ENCODE measurements at regions of chr2 and their contacts with region 1.

Region 1: DNA sequence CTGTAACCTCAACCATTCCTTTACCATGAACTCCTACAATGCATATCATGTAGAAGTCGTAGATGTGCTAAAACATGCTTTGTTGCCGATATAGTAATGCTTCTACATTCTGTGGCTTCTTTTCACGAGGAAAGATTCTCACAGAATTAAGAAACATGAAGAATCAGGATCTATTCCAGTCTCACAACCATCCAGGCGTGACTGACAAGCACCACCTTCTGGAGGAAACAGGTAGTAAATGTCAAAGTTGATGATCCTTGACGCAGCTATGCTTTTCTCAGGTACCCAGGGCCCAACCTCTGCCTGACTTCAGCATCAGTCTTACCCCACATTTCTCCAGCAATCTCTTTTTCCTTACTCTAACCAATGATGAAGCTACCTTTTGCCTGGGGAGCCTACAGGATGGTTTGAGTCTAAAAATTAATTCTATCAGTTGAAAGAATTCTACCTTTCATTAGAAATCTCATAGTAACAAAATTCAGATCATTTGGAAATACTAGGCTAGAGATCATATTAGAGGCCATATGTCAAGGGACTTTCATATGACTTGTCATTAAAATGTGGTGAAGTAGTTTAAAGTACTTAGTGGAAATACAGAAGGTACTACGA is 123.3 kb upstream of the RND3 start:
- DNase-seq: peak; percentile 74
- H3K4me3 Mint-ChIP-seq: no peak overlapping the region
- H3K27ac Mint-ChIP-seq: no peak overlapping the region
- H3K4me1 Mint-ChIP-seq: peaks cover 10% of the 10 kb centered on the region
- H3K27me3 Mint-ChIP-seq: no peaks in the 10 kb centered on the region
- CTCF ChIP-seq: peak; percentile 82

Region 2: GRCh38 chr2:149733936-149734685 is 876.7 kb before region 1 on chr2:
- CTCF ChIA-PET with region 1: no interaction called
- POLR2A ChIA-PET with region 1: no interaction called
- intact Hi-C with region 1: loop called (anchors 10 kb)
- DNase-seq: peak; percentile 33
- H3K4me3 Mint-ChIP-seq: no peak overlapping the region
- H3K27ac Mint-ChIP-seq: peak overlapping the region; percentile 40
- H3K4me1 Mint-ChIP-seq: peaks cover 32% of the 10 kb centered on the region
- H3K27me3 Mint-ChIP-seq: no peaks in the 10 kb centered on the region
- CTCF ChIP-seq: no peak

Region 3: DNA sequence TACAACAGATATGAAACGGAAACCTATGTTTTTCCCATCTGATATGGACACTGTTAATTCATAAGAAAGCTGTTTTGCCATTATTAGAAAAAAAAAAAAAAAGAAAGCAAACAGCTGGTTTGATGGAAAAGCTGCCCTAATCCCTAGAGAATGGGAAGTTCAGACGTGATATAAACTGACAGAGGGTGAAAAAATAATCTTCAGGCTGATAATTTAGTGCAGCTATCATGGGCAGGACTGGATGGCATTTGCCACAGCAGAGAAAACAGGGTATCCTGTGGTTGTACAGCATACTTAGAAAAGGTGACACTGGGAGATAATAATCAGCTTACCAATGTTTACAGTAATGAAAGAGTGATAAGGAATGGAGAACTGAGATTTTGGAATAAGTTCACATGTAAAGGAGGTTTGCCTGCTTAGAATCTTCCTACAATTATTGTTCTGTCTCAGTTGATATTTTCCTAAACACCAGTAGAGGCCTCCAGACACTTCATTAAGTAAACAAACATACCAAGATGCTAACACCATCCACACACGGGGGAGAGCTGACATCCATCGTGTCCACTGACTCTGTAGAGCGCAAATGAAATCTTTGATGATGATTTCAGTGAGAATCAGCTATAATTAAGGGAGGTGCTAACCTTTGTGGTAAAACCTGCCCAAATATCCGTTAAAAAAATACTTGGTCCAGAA is 811.6 kb before region 1 on chr2:
- CTCF ChIA-PET with region 1: interaction called, 6 read pairs
- POLR2A ChIA-PET with region 1: no interaction called
- intact Hi-C with region 1: loop called (anchors 1 kb)
- DNase-seq: peak; percentile 42
- H3K4me3 Mint-ChIP-seq: no peak overlapping the region
- H3K27ac Mint-ChIP-seq: no peak overlapping the region
- H3K4me1 Mint-ChIP-seq: no peaks in the 10 kb centered on the region
- H3K27me3 Mint-ChIP-seq: no peaks in the 10 kb centered on the region
- CTCF ChIP-seq: peak; percentile 33

Region 4: DNA sequence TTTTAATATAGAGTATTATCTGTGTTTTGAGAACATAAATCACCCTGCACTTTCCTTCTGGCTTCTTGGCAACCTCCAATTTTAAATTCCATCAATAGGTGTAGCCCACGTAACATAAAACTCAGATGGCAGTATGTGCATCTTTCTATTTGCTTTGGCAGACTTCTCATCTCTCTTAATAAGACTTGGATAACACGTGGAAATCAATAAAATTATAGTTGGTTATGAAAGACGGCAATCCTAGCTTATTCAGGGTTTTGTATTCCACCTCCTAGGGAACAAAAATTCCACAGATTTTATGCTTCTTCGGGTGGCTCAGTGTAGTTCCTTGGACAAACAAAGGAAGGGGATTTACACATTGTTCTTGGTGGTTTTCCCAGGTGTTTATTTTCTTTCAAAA is 422.6 kb before region 1 on chr2:
- CTCF ChIA-PET with region 1: interaction called, 4 read pairs
- POLR2A ChIA-PET with region 1: no interaction called
- intact Hi-C with region 1: loop called (anchors 5 kb)
- DNase-seq: peak; percentile 51
- H3K4me3 Mint-ChIP-seq: peak overlapping the region; percentile 4
- H3K27ac Mint-ChIP-seq: peak overlapping the region; percentile 60
- H3K4me1 Mint-ChIP-seq: peaks cover 20% of the 10 kb centered on the region
- H3K27me3 Mint-ChIP-seq: no peaks in the 10 kb centered on the region
- CTCF ChIP-seq: no peak

Region 5: DNA sequence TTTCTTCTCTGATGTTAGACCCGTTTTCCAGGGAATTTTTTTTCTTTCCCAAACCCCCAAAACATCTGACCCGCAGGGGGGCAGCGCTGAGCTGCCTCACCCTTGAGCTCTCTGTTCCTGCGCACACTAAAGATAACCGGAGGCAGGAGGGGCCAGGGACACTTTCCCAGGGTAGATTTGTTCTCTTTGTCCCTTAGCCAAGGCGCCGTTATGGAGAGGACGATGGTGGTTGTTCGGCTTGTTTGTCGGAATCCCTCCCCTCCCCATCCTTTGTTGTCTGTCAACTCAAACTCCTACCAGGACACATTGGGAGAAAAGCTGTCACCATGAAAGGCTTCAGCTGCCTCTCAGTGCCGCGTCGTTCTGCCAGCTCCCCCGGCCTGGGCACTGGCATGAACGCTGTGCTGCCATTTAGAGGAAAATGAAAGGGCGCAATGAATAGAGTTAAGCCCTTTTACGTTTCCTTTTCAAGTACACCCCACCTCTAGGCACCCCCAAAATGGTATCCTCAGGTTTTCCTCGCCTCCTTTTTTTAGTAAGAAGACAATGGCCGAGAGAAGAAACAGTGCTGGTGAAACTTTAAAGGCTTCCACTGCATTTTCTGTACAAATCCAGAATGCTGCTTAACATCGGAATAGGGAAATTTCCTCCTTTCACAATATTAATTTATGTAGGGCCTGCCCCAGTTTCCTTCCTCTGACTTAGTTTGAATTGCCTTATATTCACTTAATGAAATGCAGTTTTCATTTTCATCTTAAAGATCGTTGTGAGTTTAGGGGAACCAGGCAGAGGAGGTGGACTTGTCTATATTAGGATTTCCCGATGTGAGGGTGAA is 185.4 kb before region 1 on chr2:
- CTCF ChIA-PET with region 1: no interaction called
- POLR2A ChIA-PET with region 1: no interaction called
- intact Hi-C with region 1: loop called (anchors 1 kb)
- DNase-seq: peak; percentile 16
- H3K4me3 Mint-ChIP-seq: no peak overlapping the region
- H3K27ac Mint-ChIP-seq: no peak overlapping the region
- H3K4me1 Mint-ChIP-seq: no peaks in the 10 kb centered on the region
- H3K27me3 Mint-ChIP-seq: no peaks in the 10 kb centered on the region
- CTCF ChIP-seq: peak; percentile 27

Region 6: DNA sequence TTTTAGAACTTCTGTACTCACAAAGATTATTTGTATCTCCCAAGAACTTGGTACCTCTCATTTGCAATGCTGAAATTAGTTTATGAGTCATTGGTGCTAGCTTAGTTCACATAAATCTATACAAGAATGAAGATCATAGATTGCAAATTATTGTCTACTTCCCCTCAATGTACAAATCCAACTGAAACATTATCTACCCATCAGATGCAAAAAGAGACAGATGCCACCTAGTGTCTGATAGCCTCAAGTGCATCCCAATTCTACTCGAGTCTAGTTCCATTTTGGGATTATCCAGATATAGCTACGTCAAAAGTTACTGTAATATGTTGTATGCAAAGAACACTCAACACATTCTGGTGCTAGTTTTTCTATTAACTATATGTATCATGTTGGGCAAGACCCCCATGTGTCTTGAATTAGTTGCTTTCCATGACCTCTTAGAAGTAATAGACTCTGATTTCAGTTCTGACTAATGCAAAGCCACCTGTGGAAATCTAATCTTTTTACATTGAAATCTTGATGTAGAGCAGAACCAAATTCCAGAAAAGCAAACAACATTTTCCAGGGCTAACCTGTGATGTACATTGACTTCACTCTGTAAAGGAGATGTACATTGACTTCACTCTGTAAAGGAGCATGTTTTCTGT is 440.9 kb after region 1 on chr2:
- CTCF ChIA-PET with region 1: interaction called, 3 read pairs
- POLR2A ChIA-PET with region 1: no interaction called
- intact Hi-C with region 1: loop called (anchors 5 kb)
- DNase-seq: peak; percentile 73
- H3K4me3 Mint-ChIP-seq: no peak overlapping the region
- H3K27ac Mint-ChIP-seq: no peak overlapping the region
- H3K4me1 Mint-ChIP-seq: peaks cover 16% of the 10 kb centered on the region
- H3K27me3 Mint-ChIP-seq: no peaks in the 10 kb centered on the region
- CTCF ChIP-seq: peak; percentile 76

Measured in MCF 10A (cell line).